IMR-90 (cell line): ENCODE measurements at regions of chr17 and their contacts with region 1.

Region 1: GRCh38 chr17:66165513-66166123 is 26.3 kb downstream of the CEP112 start:
- DNase-seq: peak; percentile 75
- ATAC-seq: peak; percentile 92
- H3K4me3 ChIP-seq: no peak overlapping the region
- H3K27ac ChIP-seq: no peak overlapping the region
- H3K4me1 ChIP-seq: no peaks in the 10 kb centered on the region
- H3K27me3 ChIP-seq: no peaks in the 10 kb centered on the region
- CTCF ChIP-seq: peak; percentile 81
- POLR2A ChIP-seq: 0 out of 2 replicates have a peak, but pooled peaks have one; percentile 38
- RAD21 ChIP-seq: peak; percentile 91

Region 2: DNA sequence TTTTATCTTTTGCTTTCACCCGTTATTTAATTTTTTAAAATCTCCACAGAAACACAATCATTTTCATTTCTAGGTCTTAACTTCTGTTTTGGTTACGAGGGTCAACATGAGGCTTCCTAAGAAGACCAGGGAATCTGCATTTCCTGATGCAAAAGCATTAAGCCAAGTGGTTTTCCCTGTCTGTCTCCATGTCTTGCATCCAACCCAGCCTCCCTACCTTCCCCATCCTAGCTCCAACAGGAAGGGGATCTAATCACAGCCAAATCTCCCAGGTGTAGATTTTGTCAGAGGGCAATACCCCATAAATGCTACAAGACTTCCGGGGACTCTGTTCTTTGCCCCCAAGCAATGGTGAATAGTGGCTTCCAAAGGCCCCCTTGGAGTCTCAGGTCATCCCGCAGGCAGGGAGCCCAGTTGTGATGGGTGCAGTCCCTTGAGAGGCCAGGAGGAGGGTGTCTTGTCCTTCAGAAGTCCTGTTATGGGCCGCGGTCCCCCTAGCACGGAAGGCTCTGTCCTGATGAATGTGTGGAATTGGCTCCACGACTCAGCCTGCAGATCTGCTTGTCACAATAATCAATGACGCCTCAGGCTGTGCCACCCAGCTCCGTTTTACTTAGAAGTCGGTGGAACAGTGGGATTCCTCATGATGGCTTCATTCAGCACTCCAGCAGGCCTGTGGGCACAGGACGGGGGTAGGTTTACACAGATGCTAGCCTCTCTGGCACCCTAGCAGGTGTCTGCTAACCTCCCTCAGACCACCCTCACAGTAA is 887.4 kb before region 1 on chr17:
- CTCF ChIA-PET with region 1: interaction called, 3 read pairs
- POLR2A ChIA-PET with region 1: no interaction called
- dilution Hi-C with region 1: no loop called
- in situ Hi-C with region 1: no loop called
- intact Hi-C with region 1: loop called (anchors 1 kb)
- DNase-seq: peak; percentile 62
- ATAC-seq: peak; percentile 97
- H3K4me3 ChIP-seq: no peak overlapping the region
- H3K27ac ChIP-seq: no peak overlapping the region
- H3K4me1 ChIP-seq: peaks cover 3% of the 10 kb centered on the region; the same call in 1 of the 2 replicates
- H3K27me3 ChIP-seq: peaks cover 4% of the 10 kb centered on the region
- CTCF ChIP-seq: peak; percentile 72
- POLR2A ChIP-seq: no peak
- RAD21 ChIP-seq: peak; percentile 84

Region 3: DNA sequence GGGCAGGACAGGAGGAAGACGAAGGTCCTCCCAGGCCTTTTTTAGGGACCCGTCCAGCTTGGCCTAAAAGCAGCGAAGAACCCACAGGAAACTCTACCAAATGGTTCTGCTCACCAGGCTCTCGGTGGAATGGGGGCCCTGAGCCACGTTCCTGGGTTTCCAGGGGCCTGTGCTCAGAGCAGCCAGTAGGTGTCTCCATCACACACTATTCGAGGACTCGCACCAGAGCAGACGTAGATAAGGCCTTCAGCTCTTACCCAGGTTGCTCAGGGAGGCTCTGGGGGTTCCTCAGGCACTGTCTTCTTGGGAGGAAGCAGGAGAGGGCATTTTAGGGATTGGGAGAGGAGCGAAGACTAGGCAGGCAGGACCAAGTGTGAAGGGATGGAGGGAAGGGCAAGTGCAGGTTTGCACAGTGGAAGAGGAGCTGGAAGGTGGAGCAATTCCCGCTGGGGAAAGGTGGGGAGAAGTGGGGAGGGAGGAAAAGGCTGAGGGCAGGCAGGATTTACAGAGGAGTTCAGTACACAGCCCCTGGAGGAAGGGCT is 871.4 kb before region 1 on chr17:
- CTCF ChIA-PET with region 1: interaction called, 11 read pairs
- POLR2A ChIA-PET with region 1: no interaction called
- dilution Hi-C with region 1: no loop called
- in situ Hi-C with region 1: loop called (anchors 5 kb)
- intact Hi-C with region 1: loop called (anchors 1 kb)
- DNase-seq: peak; percentile 71
- ATAC-seq: peak; percentile 99
- H3K4me3 ChIP-seq: no peak overlapping the region
- H3K27ac ChIP-seq: no peak overlapping the region
- H3K4me1 ChIP-seq: no peaks in the 10 kb centered on the region
- H3K27me3 ChIP-seq: no peaks in the 10 kb centered on the region; the same call in none of the 2 replicates
- CTCF ChIP-seq: peak; percentile 83
- POLR2A ChIP-seq: no peak
- RAD21 ChIP-seq: peak; percentile 85

Region 4: GRCh38 chr17:65455972-65456343 is 709.7 kb before region 1 on chr17:
- CTCF ChIA-PET with region 1: no interaction called
- POLR2A ChIA-PET with region 1: no interaction called
- dilution Hi-C with region 1: no loop called
- in situ Hi-C with region 1: no loop called
- intact Hi-C with region 1: loop called (anchors 1 kb)
- DNase-seq: peak; percentile 1
- ATAC-seq: peak; percentile 70
- H3K4me3 ChIP-seq: no peak overlapping the region
- H3K27ac ChIP-seq: no peak overlapping the region
- H3K4me1 ChIP-seq: no peaks in the 10 kb centered on the region
- H3K27me3 ChIP-seq: peaks cover 15% of the 10 kb centered on the region
- CTCF ChIP-seq: peak; percentile 44
- POLR2A ChIP-seq: no peak
- RAD21 ChIP-seq: peak; percentile 44